Posterior vena cava (tissue), 2 donors: ENCODE measurements at regions of chr2 and their contacts with region 1.

Region 1: DNA sequence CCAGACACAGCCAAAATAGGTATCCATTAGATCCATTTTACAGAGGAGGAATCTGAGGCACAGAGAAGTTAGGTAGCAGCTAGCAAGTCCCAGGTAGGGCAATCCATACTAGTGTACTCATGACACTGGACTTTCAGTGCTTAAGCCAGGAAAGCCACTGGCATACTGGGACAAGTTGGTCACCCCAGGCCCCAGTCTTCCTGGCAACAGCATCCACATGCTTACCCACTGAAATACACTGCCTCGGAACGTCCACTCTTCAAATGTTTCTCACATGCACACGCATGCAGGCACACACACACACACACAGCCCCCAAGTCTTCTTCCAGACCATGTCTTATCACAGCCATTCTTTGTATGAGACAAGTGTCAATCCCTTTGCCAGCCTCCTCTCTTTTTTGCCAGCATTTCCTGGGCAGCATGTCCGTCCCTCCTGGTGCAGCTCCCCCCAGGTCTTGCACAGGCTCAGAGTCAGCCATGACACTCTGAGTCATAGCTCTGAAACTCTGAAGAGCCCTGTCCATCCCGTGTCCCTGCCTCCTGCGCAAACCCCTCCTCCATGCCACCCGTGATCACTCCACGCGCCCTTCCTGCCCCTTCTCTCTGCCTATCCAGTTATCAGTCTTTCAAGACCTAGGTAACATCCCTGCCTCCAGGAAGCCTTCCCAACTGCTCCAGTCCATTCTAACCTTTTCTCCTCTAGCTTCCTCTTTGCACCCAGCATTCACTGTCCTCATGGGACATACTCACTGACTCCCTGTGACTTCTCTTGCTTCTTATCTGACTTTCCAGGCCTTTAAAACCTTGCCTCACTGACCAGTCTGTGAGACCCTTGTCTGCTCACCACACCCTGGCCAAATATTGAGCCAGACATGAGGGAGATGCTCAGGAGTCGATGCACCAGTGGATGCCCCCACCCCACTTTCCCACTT is 10.9 kb upstream of the TEX261 start:
- DNase-seq: no peak

Region 2: DNA sequence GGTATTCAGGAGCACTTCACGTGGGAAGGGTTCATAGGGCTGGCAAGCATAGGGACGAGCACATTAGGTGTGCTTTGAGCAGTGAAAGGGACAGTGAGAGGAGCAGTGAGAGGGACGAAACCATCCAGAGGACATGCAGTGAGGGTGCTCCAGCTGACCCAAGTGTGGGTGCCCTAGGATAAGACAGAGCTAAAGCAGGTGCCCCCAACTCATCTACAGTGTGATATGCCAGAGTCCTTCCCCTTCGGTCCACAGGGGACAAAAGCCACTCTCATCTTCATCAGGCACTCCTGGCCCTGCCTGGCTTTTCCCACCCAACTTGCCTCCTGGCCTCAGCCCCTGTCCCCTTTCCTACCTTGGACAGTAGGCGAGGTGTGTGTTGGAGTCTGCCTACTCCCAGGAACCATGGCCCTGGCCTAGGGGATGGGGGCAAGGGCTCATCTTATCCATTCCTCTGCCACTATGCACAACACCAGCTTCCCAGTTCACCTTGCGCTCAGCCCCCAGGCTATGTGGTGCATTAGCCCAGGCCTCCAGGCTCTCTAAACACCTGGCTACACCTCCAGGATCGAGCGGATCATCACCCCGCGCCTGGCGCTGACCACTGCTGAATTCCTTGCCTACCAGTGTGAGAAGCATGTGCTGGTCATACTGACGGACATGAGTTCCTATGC is 43.2 kb before region 1 on chr2:
- intact Hi-C with region 1: loop called in 1 of 2 experiments (anchors 2 kb)
- DNase-seq: no peak

Region 3: DNA sequence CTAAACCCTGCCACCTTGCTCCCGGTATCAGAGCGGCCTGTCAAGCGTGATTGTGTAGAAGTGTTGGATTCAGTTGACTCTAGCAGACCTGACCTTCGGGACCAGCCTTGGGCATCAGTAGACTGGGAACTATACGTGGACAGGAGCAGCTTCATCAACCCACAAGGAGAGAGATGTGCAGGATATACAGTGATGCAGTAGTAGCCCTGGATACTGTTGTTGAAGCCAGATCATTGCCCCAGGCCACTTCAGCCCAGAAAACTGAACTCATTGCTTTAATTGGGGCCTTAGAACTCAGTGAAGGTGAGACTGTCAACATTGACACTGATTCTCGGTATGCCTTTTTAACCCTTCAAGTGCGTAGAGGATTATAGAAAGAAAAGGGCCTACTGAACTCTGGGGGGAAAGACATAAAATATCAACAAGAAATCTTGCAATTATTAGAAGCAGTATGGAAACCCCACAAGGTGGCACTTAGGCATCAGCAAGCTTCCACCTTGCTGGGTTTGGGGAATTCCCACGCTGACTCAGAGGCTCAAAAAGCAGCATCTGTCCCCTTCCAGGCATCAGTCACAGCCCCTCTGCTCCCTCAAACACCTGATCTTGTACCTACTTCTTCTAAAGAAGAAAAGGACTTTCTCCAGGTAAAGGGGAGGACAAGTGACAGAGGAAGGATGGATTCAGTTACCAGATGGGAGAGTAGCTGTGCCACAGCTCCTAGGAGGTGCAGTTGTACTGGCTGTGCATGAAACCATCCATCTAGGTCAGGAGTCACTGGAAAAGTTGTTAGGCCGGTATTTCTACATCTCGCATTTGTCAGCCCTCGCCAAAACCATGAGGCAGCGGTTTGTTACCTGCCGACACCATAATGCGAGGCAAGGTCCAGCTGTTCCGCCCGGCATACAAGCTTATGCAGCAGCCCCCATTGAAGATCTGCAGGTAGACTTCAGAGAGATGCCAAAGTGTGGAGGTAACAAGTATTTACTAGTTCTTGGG is 44.1 kb after region 1 on chr2:
- intact Hi-C with region 1: no loop called
- DNase-seq: no peak